AG04450 (cell line): ENCODE measurements at regions of chr14 and their contacts with region 1.

Region 1: GRCh38 chr14:99415496-99416281 is 65.0 kb downstream of the SETD3 start:
- DNase-seq: peak; percentile 48
- H3K4me3 ChIP-seq: no peak overlapping the region
- H3K27ac ChIP-seq: no peak overlapping the region
- H3K27me3 ChIP-seq: no peaks in the 10 kb centered on the region
- CTCF ChIP-seq: peak; percentile 83

Region 2: GRCh38 chr14:99266181-99267178 is 149.2 kb before region 1 on chr14:
- CTCF ChIA-PET with region 1: interaction called, 10 read pairs
- POLR2A ChIA-PET with region 1: no interaction called
- DNase-seq: peak; percentile 13
- H3K4me3 ChIP-seq: no peak overlapping the region
- H3K27ac ChIP-seq: no peak overlapping the region
- H3K27me3 ChIP-seq: peaks cover 18% of the 10 kb centered on the region
- CTCF ChIP-seq: peak; percentile 99

Region 3: DNA sequence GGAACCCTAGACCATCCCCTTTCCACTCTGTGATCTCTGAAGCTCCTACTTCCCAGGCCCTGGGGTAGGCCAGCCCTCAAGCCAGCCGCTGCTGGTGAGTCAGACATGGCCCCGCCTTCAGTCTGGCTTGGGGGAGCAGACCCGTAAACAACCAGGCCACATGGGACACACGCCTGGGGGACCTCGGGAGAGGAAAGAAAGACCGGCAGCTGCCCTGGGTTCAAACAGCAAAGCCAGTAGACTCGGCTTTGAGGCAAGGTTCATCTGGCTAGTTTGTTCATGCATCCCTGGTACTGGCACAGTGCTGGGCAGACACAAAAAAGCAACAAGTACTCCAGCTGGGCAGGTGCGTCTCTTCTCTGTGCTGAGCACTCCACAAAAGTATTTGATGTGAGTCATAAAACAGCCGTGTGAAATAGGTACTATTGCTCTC is 36.9 kb before region 1 on chr14:
- CTCF ChIA-PET with region 1: interaction called, 11 read pairs
- POLR2A ChIA-PET with region 1: no interaction called
- DNase-seq: no peak
- H3K4me3 ChIP-seq: no peak overlapping the region
- H3K27ac ChIP-seq: no peak overlapping the region
- H3K27me3 ChIP-seq: peaks cover 3% of the 10 kb centered on the region
- CTCF ChIP-seq: no peak

Region 4: GRCh38 chr14:99401621-99402284 is 13.9 kb before region 1 on chr14:
- CTCF ChIA-PET with region 1: interaction called, 305 read pairs
- POLR2A ChIA-PET with region 1: no interaction called
- DNase-seq: no peak
- H3K4me3 ChIP-seq: no peak overlapping the region
- H3K27ac ChIP-seq: no peak overlapping the region
- H3K27me3 ChIP-seq: no peaks in the 10 kb centered on the region
- CTCF ChIP-seq: no peak

Region 5: DNA sequence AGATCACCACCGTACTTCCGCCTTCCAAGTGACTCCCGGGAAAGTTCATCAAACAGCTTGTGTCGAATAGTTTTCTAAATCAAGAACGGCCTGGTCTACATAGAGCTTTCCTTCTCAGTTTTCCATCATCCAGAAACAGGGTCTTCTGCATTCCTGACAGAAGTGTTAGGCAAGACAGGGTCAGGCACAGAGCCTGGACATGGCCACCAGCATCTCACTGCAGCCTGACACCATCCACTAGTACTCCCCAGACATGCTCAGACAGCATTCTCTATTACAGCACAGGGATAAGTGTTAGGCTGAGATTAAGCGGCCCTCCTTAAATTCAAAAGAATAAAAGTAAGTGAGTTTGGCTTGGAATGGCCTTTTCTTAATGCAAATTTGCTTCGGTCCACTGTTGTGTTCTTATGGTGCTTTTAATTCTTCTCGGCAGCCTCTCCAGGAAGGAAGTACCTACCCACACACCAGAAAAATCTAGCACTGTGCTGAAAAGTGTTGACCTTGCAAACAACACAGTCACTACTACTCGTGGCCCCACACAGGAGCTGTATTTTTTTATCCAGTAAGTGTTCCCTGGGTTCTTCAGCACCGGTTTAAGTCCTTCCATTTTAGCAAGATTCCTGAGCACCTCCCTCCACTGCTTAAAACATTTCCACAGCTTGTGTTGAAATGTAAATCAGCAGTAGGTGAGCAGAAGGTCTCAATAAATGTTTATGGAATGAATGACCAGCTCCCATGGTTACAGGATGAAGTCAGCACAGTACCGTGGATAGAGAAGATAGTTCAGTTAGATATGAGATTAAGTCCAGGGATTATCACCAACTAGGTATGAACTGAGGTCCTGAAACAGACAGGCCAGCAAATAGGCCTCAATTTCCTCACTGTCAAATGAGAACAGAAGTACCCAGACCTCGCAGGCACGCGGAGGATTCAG is 20.8 kb after region 1 on chr14:
- CTCF ChIA-PET with region 1: interaction called, 30 read pairs
- POLR2A ChIA-PET with region 1: no interaction called
- DNase-seq: no peak
- H3K4me3 ChIP-seq: no peak overlapping the region
- H3K27ac ChIP-seq: no peak overlapping the region
- H3K27me3 ChIP-seq: no peaks in the 10 kb centered on the region
- CTCF ChIP-seq: no peak